Transverse colon (tissue), 4 donors: ENCODE measurements at regions of chr9 and their contacts with region 1.

Region 1: GRCh38 chr9:131762356-131762932 is 22.6 kb upstream of the RAPGEF1 start:
- DNase-seq: peak; percentile 78
- H3K4me3 ChIP-seq: no peak overlapping the region
- H3K27ac ChIP-seq: no peak overlapping the region
- H3K4me1 ChIP-seq: peaks cover 0 to 8% (median 3%) of the 10 kb centered on the region in 4 donors
- H3K27me3 ChIP-seq: peaks cover 31% of the 10 kb centered on the region
- CTCF ChIP-seq: peak; percentile 89 to 97 (median 96)
- EP300 ChIP-seq: no peak
- POLR2A ChIP-seq: no peak

Region 2: DNA sequence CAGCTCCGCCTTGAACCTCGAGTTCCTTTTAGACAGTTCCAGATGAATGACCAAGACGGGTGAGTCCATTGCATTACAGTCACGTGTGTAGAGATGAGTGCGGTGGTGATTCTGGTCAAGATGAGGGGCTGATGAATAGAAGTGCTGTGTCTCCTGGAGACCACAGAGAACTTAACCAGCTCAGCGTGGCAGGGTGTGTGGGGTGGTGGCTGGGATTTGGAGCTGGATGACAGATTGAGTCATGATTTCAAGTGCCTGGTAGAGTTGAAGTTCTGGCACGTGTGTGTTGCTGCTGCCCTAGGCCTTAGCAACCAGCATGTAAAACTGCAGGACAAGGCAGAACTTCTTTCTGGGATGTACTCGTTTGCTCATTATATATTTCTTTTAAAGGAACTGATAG is 315.3 kb before region 1 on chr9:
- in situ Hi-C with region 1: no loop called
- intact Hi-C with region 1: no loop called
- DNase-seq: no peak
- H3K4me3 ChIP-seq: no peak overlapping the region
- H3K27ac ChIP-seq: no peak overlapping the region
- H3K4me1 ChIP-seq: peaks cover 0 to 6% (median 3%) of the 10 kb centered on the region in 4 donors
- H3K27me3 ChIP-seq: no peaks in the 10 kb centered on the region
- CTCF ChIP-seq: no peak
- EP300 ChIP-seq: no peak
- POLR2A ChIP-seq: no peak

Region 3: GRCh38 chr9:132240753-132241493 is 478.5 kb after region 1 on chr9:
- in situ Hi-C with region 1: no loop called
- intact Hi-C with region 1: loop called (anchors 5 kb)
- DNase-seq: peak; percentile 98
- H3K4me3 ChIP-seq: peak overlapping the region; percentile 26 to 70 (median 68)
- H3K27ac ChIP-seq: peak overlapping the region; percentile 42 to 63 (median 51)
- H3K4me1 ChIP-seq: peaks cover 0 to 19% (median 15%) of the 10 kb centered on the region in 4 donors
- H3K27me3 ChIP-seq: peaks cover 50% of the 10 kb centered on the region
- CTCF ChIP-seq: no peak
- EP300 ChIP-seq: no peak
- POLR2A ChIP-seq: peak; percentile 27

Region 4: DNA sequence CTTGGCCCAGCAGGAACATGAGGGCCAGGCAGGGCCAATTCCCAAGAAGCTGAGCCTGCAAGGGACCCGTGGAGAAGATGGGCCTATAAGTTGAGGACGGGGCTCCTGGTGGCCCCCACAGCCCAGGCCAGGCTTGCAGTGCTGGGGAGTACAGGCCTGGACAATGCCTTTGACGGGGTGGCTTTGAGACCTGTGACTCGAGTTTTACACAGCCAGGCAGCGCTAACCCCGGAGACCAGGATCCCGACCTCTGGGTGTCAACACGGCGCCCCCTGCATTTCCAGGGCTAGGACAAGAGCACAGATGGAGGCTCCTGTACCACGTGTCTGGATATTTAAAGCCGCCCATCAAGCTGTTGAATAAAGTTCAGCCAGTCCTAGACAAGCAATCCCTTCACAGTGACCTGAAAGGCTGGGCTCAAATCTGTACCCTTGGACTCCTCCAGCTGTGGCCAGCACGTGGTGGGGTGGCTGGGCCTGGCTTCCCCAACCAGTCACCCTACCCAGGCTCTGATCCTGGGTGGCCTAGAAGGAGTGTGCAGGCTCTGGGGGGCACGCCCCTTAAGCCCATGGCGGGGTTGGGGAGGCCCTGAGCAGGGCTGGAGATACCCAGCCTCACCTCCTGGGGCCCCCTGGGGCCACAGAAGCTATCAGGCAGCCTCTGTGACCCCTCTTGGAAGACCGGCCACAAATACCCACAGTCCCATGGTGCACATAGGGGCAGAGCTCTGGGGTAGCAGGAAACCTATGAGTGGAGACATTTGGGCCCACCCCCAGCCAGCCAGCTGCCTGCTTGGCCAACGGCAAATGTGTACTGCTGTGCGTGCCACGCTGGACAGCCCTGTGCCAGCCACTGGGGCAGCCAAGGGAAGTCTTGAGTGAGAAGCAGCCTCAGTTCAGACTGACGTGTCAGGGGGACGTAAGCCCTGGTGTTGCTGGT is 488.1 kb after region 1 on chr9:
- in situ Hi-C with region 1: loop called in 3 of 4 experiments (anchors 5 to 10 kb)
- intact Hi-C with region 1: no loop called
- DNase-seq: no peak
- H3K4me3 ChIP-seq: no peak overlapping the region
- H3K27ac ChIP-seq: no peak overlapping the region
- H3K4me1 ChIP-seq: peaks cover 0 to 3% (median 0%) of the 10 kb centered on the region in 4 donors
- H3K27me3 ChIP-seq: peaks cover 50% of the 10 kb centered on the region
- CTCF ChIP-seq: no peak
- EP300 ChIP-seq: no peak
- POLR2A ChIP-seq: no peak

Region 5: GRCh38 chr9:132260846-132261245 is 498.4 kb after region 1 on chr9:
- in situ Hi-C with region 1: loop called in 3 of 4 experiments (anchors 5 to 10 kb)
- intact Hi-C with region 1: loop called (anchors 5 kb)
- DNase-seq: no peak
- H3K4me3 ChIP-seq: no peak overlapping the region
- H3K27ac ChIP-seq: no peak overlapping the region
- H3K4me1 ChIP-seq: peaks cover 0 to 9% (median 6%) of the 10 kb centered on the region in 4 donors
- H3K27me3 ChIP-seq: no peaks in the 10 kb centered on the region
- CTCF ChIP-seq: no peak
- EP300 ChIP-seq: no peak
- POLR2A ChIP-seq: no peak

Region 6: DNA sequence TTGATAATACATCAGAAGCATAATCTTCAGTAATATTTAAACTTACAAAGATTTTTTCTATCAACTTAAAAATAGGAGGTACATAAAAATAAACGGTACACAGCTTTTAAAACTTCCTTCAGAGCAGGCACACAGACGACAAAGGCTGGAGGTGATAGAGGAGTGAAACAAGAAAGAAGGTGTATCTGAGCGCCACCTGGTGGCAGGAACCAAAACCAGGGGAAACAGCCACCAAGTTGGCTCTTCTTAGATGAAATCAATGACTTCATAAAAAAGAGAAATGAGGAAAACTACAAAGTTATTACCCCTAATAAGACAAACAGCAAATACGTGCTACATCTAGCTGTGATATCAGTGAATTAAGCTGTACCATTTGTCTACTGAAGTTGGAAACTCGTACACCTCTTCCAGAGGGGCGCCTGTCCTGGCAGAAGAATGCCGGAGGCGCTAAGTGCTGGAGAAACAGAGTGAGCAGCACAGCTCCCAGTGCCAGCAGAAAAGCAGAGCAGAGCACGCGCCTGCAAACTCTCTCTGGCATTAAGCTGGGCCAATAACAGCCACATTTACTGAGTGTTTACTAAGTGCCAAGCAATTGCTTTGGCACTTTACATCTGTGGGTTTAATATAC is 506.4 kb after region 1 on chr9:
- in situ Hi-C with region 1: loop called in 1 of 4 experiments (anchors 5 kb)
- intact Hi-C with region 1: loop called (anchors 5 kb)
- DNase-seq: peak; percentile 65
- H3K4me3 ChIP-seq: no peak overlapping the region
- H3K27ac ChIP-seq: no peak overlapping the region
- H3K4me1 ChIP-seq: no peaks in the 10 kb centered on the region
- H3K27me3 ChIP-seq: no peaks in the 10 kb centered on the region
- CTCF ChIP-seq: peak; percentile 74 to 91 (median 85)
- EP300 ChIP-seq: no peak
- POLR2A ChIP-seq: no peak